ENCODE measurements at regions of chr17 and their contacts with region 1.

Region 1: DNA sequence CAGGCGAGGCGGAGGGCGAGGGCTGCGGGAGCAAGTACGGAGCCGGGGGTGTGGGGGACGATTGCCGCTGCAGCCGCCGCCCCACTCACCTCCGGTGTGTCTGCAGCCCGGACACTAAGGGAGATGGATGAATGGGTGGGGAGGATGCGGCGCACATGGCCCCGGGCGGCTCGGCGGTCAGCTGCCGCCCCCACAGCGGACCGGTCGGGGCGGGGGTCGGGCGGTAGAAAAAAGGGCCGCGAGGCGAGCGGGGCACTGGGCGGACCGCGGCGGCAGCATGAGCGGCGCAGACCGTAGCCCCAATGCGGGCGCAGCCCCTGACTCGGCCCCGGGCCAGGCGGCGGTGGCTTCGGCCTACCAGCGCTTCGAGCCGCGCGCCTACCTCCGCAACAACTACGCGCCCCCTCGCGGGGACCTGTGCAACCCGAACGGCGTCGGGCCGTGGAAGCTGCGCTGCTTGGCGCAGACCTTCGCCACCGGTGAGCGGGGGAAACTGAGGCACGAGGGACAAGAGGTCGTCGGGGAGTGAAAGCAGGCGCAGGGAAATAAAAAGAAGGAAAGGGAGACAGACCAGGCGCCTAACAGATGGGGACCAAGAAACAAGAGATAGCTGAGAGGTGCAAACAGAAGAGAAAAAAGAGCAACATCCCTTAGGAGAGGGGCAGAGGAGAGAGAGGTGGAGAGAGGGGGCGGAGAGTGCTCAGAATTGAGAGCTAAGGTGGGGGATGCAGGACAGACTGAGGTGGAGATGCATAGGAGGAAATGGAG is at the start of gene PNMT:
- DNase-seq: peak; percentile 76 to 89 (median 80)
- ATAC-seq: peak; percentile 72
- H3K4me3 ChIP-seq: peak within 1 kb of the TSS; percentile 51
- H3K27ac ChIP-seq: peak within 1 kb of the TSS; percentile 74
- H3K4me1 ChIP-seq: peaks cover 33 to 94% of the 10 kb centered on the region in 2 experiments
- H3K27me3 ChIP-seq: no peaks in the 10 kb centered on the region
- CTCF ChIP-seq: peak; percentile 66 to 85 (median 75)
- EP300 ChIP-seq: no peak
- POLR2A ChIP-seq: peak; percentile 63; the same call in 1 of the 2 replicates
- RAD21 ChIP-seq: peak; percentile 53 to 66
- polyA plus RNA-seq, gene PNMT: 0.55 to 1.5 TPM

Region 2: GRCh38 chr17:39473310-39473709 is 195.1 kb before region 1 on chr17:
- CTCF ChIA-PET with region 1: no interaction called
- POLR2A ChIA-PET with region 1: no interaction called
- in situ Hi-C with region 1: no loop called
- intact Hi-C with region 1: no loop called
- DNase-seq: no peak
- ATAC-seq: no peak
- H3K4me3 ChIP-seq: no peak overlapping the region
- H3K27ac ChIP-seq: no peak overlapping the region
- H3K4me1 ChIP-seq: no peaks in the 10 kb centered on the region
- H3K27me3 ChIP-seq: no peaks in the 10 kb centered on the region
- CTCF ChIP-seq: no peak
- EP300 ChIP-seq: no peak
- POLR2A ChIP-seq: no peak
- RAD21 ChIP-seq: no peak

Region 3: GRCh38 chr17:39598047-39598481 is 70.3 kb before region 1 on chr17:
- CTCF ChIA-PET with region 1: no interaction called
- POLR2A ChIA-PET with region 1: no interaction called
- in situ Hi-C with region 1: no loop called
- intact Hi-C with region 1: no loop called
- DNase-seq: peak in 1 of 4 experiments; percentile 28
- ATAC-seq: no peak
- H3K4me3 ChIP-seq: no peak overlapping the region
- H3K27ac ChIP-seq: no peak overlapping the region
- H3K4me1 ChIP-seq: peaks cover 0 to 24% of the 10 kb centered on the region in 2 experiments; a peak in 1 of 5 replicates
- H3K27me3 ChIP-seq: peaks cover 49 to 73% of the 10 kb centered on the region in 2 experiments
- CTCF ChIP-seq: no peak
- EP300 ChIP-seq: no peak
- POLR2A ChIP-seq: no peak
- RAD21 ChIP-seq: no peak

Region 4: DNA sequence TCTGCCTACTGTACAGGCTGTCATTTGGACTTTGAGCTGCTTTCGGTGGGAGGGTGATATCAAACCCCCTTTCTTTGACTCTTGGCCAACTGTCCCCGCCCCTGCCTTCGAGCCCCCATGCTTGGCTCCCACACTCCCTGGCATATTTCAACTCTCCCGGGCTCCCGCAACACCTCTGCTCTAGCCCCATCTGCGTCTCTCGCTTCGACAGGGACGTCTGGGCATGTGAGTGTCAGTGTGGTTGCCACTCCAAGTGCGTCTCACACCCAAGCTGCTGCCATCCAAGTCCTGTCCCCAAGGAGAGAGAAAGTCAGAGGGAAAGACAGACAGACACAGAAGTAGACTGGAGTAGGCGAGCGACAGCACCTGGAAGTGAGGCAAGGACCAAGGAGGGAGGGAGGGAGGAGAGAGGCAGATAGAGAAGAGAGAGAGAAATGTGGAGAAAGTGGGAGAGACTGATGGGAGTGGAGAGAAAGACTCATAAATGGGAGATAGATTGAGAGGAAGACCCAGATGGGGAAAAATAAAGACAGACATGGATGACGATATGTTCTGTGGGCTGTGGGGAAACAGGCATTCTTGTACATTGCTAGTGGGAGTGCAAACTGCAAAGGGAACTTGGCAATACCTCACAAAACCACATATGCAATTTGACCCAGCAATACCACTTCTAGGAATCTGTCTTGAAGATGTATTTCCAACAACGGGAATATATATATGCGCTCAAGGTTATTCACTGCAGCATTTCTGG is 19.6 kb before region 1 on chr17:
- CTCF ChIA-PET with region 1: interaction called, 3 read pairs
- POLR2A ChIA-PET with region 1: interaction called, 11 read pairs
- in situ Hi-C with region 1: no loop called
- intact Hi-C with region 1: no loop called
- DNase-seq: no peak
- ATAC-seq: no peak
- H3K4me3 ChIP-seq: no peak overlapping the region
- H3K27ac ChIP-seq: peak overlapping the region; percentile 88
- H3K4me1 ChIP-seq: peaks cover 61 to 68% of the 10 kb centered on the region in 2 experiments
- H3K27me3 ChIP-seq: no peaks in the 10 kb centered on the region
- CTCF ChIP-seq: no peak
- EP300 ChIP-seq: no peak
- POLR2A ChIP-seq: no peak
- RAD21 ChIP-seq: no peak

Region 5: GRCh38 chr17:39754161-39754951 is 86.0 kb after region 1 on chr17:
- CTCF ChIA-PET with region 1: interaction called, 6 read pairs
- POLR2A ChIA-PET with region 1: interaction called, 3 read pairs
- in situ Hi-C with region 1: no loop called
- intact Hi-C with region 1: loop called (anchors 5 kb)
- DNase-seq: peak; percentile 84 to 96 (median 96)
- ATAC-seq: peak; percentile 96
- H3K4me3 ChIP-seq: peak overlapping the region; percentile 53
- H3K27ac ChIP-seq: peak overlapping the region; percentile 64
- H3K4me1 ChIP-seq: peaks cover 9 to 43% of the 10 kb centered on the region in 2 experiments; a peak in 4 of 5 replicates
- H3K27me3 ChIP-seq: peaks cover 4 to 6% of the 10 kb centered on the region in 2 experiments; a peak in 2 of 5 replicates
- CTCF ChIP-seq: peak; percentile 82 to 93 (median 92)
- EP300 ChIP-seq: no peak; the same call in 1 of the 2 replicates
- POLR2A ChIP-seq: peak; percentile 66
- RAD21 ChIP-seq: peak; percentile 88 to 95

Measured in K562 (cell line).